ENCODE measurements at regions of chr3 and their contacts with region 1.

Region 1: GRCh38 chr3:118573921-118574320 is 460.7 kb downstream of the IGSF11 start:
- DNase-seq: no peak
- H3K4me3 ChIP-seq: no peak overlapping the region
- H3K27ac ChIP-seq: no peak overlapping the region
- H3K4me1 ChIP-seq: no peaks in the 10 kb centered on the region
- H3K27me3 ChIP-seq: peaks cover 5% of the 10 kb centered on the region
- CTCF ChIP-seq: no peak

Region 2: GRCh38 chr3:118495206-118495605 is 78.7 kb before region 1 on chr3:
- CTCF ChIA-PET with region 1: no interaction called
- dilution Hi-C with region 1: loop called (anchors 5 kb)
- in situ Hi-C with region 1: no loop called
- intact Hi-C with region 1: no loop called
- DNase-seq: no peak
- H3K4me3 ChIP-seq: no peak overlapping the region
- H3K27ac ChIP-seq: no peak overlapping the region
- H3K4me1 ChIP-seq: no peaks in the 10 kb centered on the region
- H3K27me3 ChIP-seq: no peaks in the 10 kb centered on the region
- CTCF ChIP-seq: peak in 1 of 2 donors; percentile 6